Esophagus muscularis mucosa (tissue), 4 donors: ENCODE measurements at regions of chr1 and their contacts with region 1.

Region 1: GRCh38 chr1:84573967-84574842 is at the start of gene CTBS:
- DNase-seq: peak; percentile 95
- H3K4me3 ChIP-seq: peak within 1 kb of the TSS; percentile 64 to 75 (median 72)
- H3K27ac ChIP-seq: peak within 1 kb of the TSS; percentile 95 to 97 (median 96)
- H3K4me1 ChIP-seq: peaks cover 15 to 26% (median 21%) of the 10 kb centered on the region in 4 donors
- H3K27me3 ChIP-seq: no peaks in the 10 kb centered on the region
- CTCF ChIP-seq: no peak
- EP300 ChIP-seq: no peak
- POLR2A ChIP-seq: peak; percentile 67
- total RNA-seq, gene CTBS: 7.1 to 8.9 (median 8.5) TPM

Region 2: GRCh38 chr1:84506002-84506728 is 68.0 kb before region 1 on chr1 and contains the starts of genes GNG5 and SPATA1:
- intact Hi-C with region 1: loop called (anchors 5 kb)
- DNase-seq: peak; percentile 99
- H3K4me3 ChIP-seq: peak within 1 kb of the TSS; percentile 77 to 85 (median 78)
- H3K27ac ChIP-seq: peak within 1 kb of the TSS; percentile 94 to 97 (median 96)
- H3K4me1 ChIP-seq: peaks cover 40 to 49% (median 44%) of the 10 kb centered on the region in 4 donors
- H3K27me3 ChIP-seq: no peaks in the 10 kb centered on the region
- CTCF ChIP-seq: no peak
- EP300 ChIP-seq: no peak
- POLR2A ChIP-seq: peak; percentile 63
- total RNA-seq, gene GNG5: 62.6 to 79.3 (median 74.5) TPM
- total RNA-seq, gene SPATA1: 0.19 to 2.7 (median 0.42) TPM in 3 of 4 donors, not detected in the other

Region 3: DNA sequence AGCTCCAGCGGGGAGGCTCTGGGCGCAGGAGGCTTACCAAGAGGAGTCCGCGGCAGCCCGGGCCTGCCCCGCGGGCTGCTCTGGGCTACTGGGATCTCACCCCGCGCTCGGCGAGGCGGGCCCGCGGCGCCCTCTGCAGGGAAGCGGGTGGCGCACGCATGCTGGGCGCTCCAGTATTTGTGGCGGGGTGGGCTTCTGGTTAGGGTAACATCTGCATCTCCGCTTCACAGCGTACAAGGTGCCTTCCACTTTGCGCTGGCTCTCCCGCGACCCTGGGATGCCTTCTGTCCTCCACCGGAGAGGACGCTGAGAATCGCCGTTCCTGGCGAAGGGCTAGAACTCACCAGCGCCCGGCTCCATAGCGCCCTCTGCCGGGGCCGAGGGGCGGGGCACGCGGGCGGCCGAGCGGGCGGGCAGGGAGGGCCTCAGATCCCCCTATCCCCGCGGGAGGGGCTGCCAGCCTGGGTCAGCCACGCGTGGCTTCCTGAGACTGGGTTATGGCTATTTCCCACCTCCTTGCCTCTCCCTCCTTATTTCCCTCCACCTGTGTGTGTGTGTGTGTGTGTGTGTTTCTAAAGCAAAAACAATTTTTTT is 46.6 kb after region 1 on chr1:
- intact Hi-C with region 1: loop called (anchors 5 kb)
- DNase-seq: no peak
- H3K4me3 ChIP-seq: peak overlapping the region; percentile 58 to 82 (median 65)
- H3K27ac ChIP-seq: peak overlapping the region; percentile 67 to 83 (median 78)
- H3K4me1 ChIP-seq: peaks cover 18 to 46% (median 41%) of the 10 kb centered on the region in 4 donors
- H3K27me3 ChIP-seq: no peaks in the 10 kb centered on the region
- CTCF ChIP-seq: peak; percentile 84 to 99 (median 92)
- EP300 ChIP-seq: no peak
- POLR2A ChIP-seq: no peak